ENCODE measurements at regions of chr13 and their contacts with region 1.

Region 1: DNA sequence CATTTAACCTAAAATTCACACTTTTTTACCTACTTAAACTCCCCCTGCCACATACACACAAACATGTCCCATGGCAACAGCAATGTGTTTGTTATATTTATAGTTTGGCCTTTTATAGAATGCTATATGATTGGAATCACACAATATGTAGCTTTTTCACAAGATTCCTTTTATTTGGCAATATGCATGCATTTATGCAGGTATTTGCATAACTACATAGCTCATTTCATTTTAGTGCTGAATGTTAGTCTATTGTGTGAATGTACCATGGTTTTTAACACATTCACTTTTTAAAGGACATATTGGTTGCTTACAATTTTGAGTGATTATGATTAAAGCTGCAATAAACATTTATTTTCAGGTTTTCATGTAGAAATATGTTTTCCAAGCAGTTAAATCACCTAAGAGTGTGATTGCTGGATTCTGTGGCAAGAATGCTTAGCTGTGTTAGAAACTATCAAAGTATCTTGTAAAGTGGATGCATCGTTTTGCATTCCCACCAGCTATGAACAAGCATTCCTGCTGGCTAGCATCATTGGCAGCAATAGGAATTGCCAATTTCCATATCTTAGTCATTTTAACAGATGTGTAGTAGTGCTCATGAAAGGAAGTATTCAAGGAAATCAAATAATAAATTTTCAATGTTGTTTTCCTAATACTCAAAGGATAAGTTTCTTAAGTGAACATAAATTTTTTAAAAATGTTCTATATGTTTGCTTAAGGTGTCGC is 557.0 kb downstream of the SLITRK1 start:
- DNase-seq: peak; percentile 69
- ATAC-seq: peak; percentile 89
- H3K4me3 ChIP-seq: no peak overlapping the region
- H3K27ac ChIP-seq: peak overlapping the region; percentile 49
- H3K4me1 ChIP-seq: peaks cover 24% of the 10 kb centered on the region
- H3K27me3 ChIP-seq: no peaks in the 10 kb centered on the region
- CTCF ChIP-seq: no peak

Region 2: DNA sequence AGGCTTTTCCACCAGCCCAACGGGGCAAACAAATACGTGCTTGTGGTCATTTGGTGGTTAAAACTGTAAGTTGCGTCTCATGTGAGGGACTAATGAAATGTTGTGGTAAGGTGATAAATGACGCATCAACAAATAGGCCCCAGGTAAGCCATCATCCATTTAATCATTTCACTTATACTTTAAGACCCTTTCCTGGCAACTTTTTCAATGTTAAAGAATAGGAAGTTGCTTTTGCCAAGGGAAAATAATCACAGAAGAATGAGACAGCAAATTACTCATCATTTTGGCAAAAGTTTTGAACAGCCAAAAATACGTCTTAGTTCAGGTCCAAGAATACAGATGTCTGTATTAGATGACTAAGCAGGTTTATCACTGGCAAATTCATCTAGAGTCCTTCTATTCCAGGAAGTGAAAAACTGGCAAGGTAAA is 103.5 kb before region 1 on chr13:
- CTCF ChIA-PET with region 1: no interaction called
- POLR2A ChIA-PET with region 1: no interaction called
- intact Hi-C with region 1: loop called (anchors 2 kb)
- DNase-seq: peak; percentile 93
- ATAC-seq: peak; percentile 84
- H3K4me3 ChIP-seq: no peak overlapping the region; the same call in 1 of the 2 replicates
- H3K27ac ChIP-seq: peak overlapping the region; percentile 98
- H3K4me1 ChIP-seq: peaks cover 23% of the 10 kb centered on the region
- H3K27me3 ChIP-seq: no peaks in the 10 kb centered on the region
- CTCF ChIP-seq: no peak

Region 3: DNA sequence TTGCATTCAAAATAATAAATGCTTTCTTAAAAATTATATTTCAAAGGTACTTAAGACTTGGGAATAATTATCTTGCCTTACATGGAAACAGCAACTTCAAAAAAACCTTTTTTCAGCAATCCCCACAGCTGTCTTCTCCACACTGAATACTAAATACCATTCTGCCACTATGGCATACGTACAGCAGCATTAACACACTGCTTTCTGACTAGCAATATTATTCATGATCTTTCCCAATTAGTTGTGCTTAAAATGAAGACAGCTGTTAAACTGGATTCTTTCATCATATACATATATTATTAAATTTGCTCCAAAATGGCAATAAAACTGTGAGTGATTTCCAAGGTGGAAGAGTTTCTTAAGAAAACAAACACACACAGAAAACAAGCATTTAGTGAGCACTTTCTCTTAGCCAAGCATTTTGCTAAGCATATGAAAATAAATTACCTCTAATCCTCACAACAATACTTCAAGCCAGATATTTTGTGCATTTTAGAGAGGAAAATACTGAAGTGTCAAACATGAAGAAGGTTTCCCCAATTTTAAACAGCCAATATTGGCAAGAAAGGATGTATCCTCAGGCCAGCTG is 52.5 kb before region 1 on chr13:
- CTCF ChIA-PET with region 1: no interaction called
- POLR2A ChIA-PET with region 1: no interaction called
- intact Hi-C with region 1: no loop called
- DNase-seq: no peak
- ATAC-seq: no peak
- H3K4me3 ChIP-seq: no peak overlapping the region
- H3K27ac ChIP-seq: no peak overlapping the region
- H3K4me1 ChIP-seq: 0 out of 2 replicates have a peak, but pooled peaks cover 2% of the 10 kb centered on the region
- H3K27me3 ChIP-seq: no peaks in the 10 kb centered on the region
- CTCF ChIP-seq: no peak

Region 4: GRCh38 chr13:84645196-84646012 is 1320.1 kb after region 1 on chr13:
- CTCF ChIA-PET with region 1: no interaction called
- POLR2A ChIA-PET with region 1: no interaction called
- intact Hi-C with region 1: loop called (anchors 10 kb)
- DNase-seq: no peak
- ATAC-seq: 0 out of 2 replicates have a peak, but pooled peaks have one; percentile 27
- H3K4me3 ChIP-seq: no peak overlapping the region
- H3K27ac ChIP-seq: no peak overlapping the region
- H3K4me1 ChIP-seq: peaks cover 7% of the 10 kb centered on the region; the same call in 1 of the 2 replicates
- H3K27me3 ChIP-seq: no peaks in the 10 kb centered on the region
- CTCF ChIP-seq: 0 out of 2 replicates have a peak, but pooled peaks have one; percentile 15

Measured in PC-3 (cell line).